GM12878 (cell line): ENCODE measurements at regions of chr17 and their contacts with region 1.

Region 1: DNA sequence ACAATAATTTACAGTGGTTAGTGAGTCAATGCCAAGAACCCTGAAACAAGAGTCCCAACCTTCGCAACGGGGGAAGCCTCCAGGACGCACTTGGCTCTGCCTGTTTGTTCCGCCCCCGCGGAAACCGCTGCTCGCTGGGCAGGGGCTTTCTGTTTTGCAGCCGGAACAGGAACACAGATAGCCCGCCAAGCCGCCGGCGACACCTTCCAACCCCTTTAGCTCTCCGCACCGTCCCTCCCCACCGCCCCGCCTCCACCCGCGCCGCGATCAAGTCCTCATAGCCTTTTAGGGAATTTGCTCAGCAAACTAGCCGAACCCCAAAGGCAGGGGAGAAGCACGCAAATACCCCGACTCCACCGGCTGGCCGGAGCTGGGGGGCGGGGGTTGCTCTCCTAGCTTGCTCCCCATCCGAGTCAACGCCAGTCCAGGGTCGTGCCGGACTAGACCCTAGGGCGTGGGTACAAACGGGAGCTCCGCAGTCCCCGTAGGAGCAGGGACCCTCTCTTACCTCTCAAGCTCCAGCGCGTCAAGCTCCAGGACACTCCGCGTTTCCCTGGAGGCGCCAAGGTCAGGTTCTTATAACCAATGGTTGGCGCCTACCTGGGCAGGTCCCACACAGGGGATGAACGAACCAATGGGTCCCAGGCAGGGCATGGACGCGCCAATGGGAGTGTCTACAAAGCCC is at the start of gene SLFN13:
- DNase-seq: peak; percentile 78
- ATAC-seq: peak; percentile 90
- H3K4me3 ChIP-seq: peak within 1 kb of the TSS; percentile 81
- H3K27ac ChIP-seq: peak within 1 kb of the TSS; percentile 99
- H3K4me1 ChIP-seq: peaks cover 3% of the 10 kb centered on the region
- H3K27me3 ChIP-seq: no peaks in the 10 kb centered on the region
- CTCF ChIP-seq: no peak
- EP300 ChIP-seq: peak; percentile 28 to 71; a peak in 2 of 4 replicates
- POLR2A ChIP-seq: peak; percentile 83
- RAD21 ChIP-seq: no peak
- polyA plus RNA-seq, gene SLFN13: 12.4 to 20.2 TPM

Region 2: DNA sequence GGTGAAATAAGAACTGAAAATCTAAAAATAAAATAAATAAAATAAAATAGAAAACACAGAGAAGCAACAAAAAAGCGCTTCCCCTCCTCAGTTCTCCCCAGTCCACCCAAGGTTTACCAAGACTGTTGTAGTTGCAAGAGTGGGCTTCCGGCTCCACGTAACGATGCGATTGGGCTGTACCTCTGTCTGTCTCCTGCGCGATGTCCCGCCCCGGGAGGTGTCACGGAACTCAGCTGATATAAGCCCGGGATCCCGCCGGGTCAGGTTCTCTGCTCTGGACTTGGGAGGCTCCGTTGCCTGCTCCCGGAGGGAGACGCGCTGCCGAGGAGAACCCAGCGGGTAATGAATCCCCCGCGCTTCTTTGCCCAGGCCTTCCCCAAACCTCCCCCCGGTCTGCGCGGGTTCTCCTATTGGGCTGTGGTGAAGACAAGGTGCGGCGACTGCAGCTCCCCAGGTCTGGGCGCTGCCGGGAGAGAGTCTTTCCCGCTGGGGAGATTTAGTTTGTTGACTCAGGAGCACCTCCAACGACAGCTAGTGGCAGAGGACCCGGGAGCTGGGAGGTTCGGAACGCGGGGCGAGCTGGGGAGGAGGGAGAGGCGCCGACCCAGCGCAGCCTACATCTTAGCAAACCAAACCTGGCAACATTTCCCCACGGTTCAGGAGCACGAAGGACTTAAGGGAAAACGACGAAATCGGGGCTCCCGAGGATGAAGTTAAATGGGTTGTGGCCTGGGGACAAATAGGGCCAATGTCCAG is 205.4 kb before region 1 on chr17 and contains the start of gene SLFN5:
- CTCF ChIA-PET with region 1: no interaction called
- POLR2A ChIA-PET with region 1: no interaction called
- RAD21 ChIA-PET with region 1: no interaction called
- SMC1A ChIA-PET with region 1: no interaction called
- in situ Hi-C with region 1: no loop called
- intact Hi-C with region 1: loop called (anchors 5 kb)
- DNase-seq: peak; percentile 73
- ATAC-seq: peak; percentile 97
- H3K4me3 ChIP-seq: peak within 1 kb of the TSS; percentile 98
- H3K27ac ChIP-seq: peak within 1 kb of the TSS; percentile 36
- H3K4me1 ChIP-seq: peaks cover 13% of the 10 kb centered on the region; the same call in 1 of the 2 replicates
- H3K27me3 ChIP-seq: no peaks in the 10 kb centered on the region
- CTCF ChIP-seq: no peak
- EP300 ChIP-seq: no peak
- POLR2A ChIP-seq: peak; percentile 76
- RAD21 ChIP-seq: no peak
- polyA plus RNA-seq, gene SLFN5: 0.19 to 0.58 TPM

Region 3: DNA sequence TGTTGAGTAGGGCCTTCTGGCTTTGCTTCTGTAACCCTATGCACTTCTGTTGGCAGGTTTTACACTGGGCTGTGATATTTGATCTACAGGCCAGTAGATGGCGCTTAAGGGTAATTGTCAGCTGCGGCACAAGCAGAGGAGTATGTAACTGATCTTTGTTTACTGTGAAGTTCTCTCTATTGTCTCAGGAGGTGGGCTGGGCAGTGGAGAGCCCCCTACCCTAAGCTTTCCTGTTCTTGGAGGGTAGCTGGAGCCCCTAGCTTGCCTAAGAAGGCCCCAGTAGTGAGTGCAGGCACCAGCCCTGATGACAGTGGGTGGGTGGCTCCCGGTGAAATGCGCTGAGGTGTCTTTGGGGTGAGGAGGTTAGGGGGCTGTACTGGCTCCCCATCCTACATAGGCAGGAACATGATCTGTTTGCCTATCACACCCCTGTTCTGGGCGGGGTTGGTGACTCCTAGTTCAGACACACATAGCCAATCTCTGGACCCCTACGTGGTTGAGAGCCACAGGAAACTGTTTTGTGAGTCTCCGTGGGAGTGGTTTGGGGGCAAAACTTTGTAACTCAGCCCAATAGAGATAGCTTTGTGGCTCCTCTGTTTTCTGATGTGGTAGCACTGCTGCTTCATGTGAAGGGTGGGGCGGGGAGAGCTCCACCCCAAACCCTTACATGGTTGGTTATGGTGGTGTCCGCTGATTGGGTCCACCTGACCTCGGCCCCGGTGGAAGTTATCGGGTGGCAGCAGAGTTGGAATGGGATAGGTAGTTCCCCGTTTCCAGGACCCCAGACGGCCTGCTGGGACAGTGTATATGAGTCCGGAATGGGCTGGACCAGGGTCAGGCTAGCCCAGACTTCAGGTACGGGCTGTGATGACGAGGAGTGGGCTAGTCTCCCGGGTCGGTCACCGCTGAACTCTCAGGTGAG is 135.3 kb before region 1 on chr17:
- CTCF ChIA-PET with region 1: interaction called, 5 read pairs
- POLR2A ChIA-PET with region 1: no interaction called
- RAD21 ChIA-PET with region 1: interaction called, 10 read pairs
- SMC1A ChIA-PET with region 1: interaction called, 20 read pairs
- in situ Hi-C with region 1: no loop called
- intact Hi-C with region 1: loop called (anchors 2 kb)
- DNase-seq: peak; percentile 43
- ATAC-seq: peak; percentile 97
- H3K4me3 ChIP-seq: peak overlapping the region; percentile 52
- H3K27ac ChIP-seq: no peak overlapping the region
- H3K4me1 ChIP-seq: peaks cover 9% of the 10 kb centered on the region
- H3K27me3 ChIP-seq: no peaks in the 10 kb centered on the region
- CTCF ChIP-seq: peak; percentile 77 to 82 (median 78)
- EP300 ChIP-seq: no peak
- POLR2A ChIP-seq: no peak
- RAD21 ChIP-seq: peak; percentile 92

Region 4: DNA sequence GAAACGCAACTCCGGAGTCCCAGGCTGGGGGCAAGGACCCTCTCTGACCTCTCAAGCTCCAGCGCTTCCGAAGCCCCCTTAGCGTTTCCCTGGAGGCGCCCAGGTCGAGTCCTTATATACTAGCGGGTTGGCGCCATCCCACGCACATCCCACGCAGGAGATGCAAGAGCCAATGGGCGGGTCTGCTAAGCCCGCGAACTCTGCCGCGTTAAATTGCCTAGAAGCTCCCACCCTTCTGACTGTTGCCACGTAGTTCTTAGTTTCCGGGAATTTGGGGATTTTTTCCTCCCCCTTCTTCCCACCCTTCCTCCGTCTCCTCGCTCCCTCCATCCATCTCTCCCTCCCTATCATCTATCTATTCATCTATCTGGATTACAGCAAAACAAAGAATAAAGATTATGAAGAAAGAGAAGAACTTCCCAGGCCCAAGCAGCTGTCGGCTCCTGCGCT is 74.8 kb before region 1 on chr17 and contains the start of gene SLFN11:
- CTCF ChIA-PET with region 1: interaction called, 7 read pairs
- POLR2A ChIA-PET with region 1: interaction called, 11 read pairs
- RAD21 ChIA-PET with region 1: interaction called, 6 read pairs
- SMC1A ChIA-PET with region 1: interaction called, 12 read pairs
- in situ Hi-C with region 1: no loop called
- intact Hi-C with region 1: loop called (anchors 1 kb)
- DNase-seq: peak; percentile 30
- ATAC-seq: peak; percentile 80
- H3K4me3 ChIP-seq: peak within 1 kb of the TSS; percentile 70
- H3K27ac ChIP-seq: no peak within 1 kb of the TSS; the same call in 1 of the 2 replicates
- H3K4me1 ChIP-seq: peaks cover 3% of the 10 kb centered on the region
- H3K27me3 ChIP-seq: peaks cover 0 to 9% of the 10 kb centered on the region in 2 experiments; a peak in 3 of 4 replicates
- CTCF ChIP-seq: no peak
- EP300 ChIP-seq: no peak
- POLR2A ChIP-seq: peak; percentile 91
- RAD21 ChIP-seq: no peak
- polyA plus RNA-seq, gene SLFN11: 7.9 to 8.0 TPM

Region 5: DNA sequence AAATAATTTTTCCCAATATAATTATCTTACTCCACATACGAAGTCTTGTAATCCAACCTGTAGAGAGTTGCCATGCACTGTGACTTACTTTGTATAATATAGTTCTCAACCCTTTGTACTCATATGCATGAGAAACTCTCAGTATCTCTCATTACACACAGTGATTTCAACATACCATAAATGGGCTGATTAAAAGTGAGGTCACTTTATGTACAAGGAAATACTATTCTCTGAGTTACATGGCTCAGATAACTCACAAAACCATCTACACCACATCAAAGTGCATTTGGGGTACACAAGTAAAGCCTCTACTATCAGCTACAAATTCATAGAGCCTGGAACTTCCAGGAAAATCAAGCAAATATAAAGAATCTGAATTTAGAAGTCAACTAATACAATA is 44.0 kb before region 1 on chr17:
- CTCF ChIA-PET with region 1: no interaction called
- POLR2A ChIA-PET with region 1: no interaction called
- RAD21 ChIA-PET with region 1: interaction called, 10 read pairs
- SMC1A ChIA-PET with region 1: interaction called, 7 read pairs
- in situ Hi-C with region 1: no loop called
- intact Hi-C with region 1: no loop called
- DNase-seq: no peak
- ATAC-seq: peak; percentile 95
- H3K4me3 ChIP-seq: no peak overlapping the region
- H3K27ac ChIP-seq: no peak overlapping the region
- H3K4me1 ChIP-seq: no peaks in the 10 kb centered on the region
- H3K27me3 ChIP-seq: no peaks in the 10 kb centered on the region
- CTCF ChIP-seq: no peak
- EP300 ChIP-seq: no peak
- POLR2A ChIP-seq: no peak
- RAD21 ChIP-seq: no peak

Region 6: GRCh38 chr17:35432176-35433074 is 15.9 kb before region 1 on chr17 and contains the start of gene SLFN12:
- CTCF ChIA-PET with region 1: interaction called, 11 read pairs
- POLR2A ChIA-PET with region 1: interaction called, 20 read pairs
- RAD21 ChIA-PET with region 1: interaction called, 4 read pairs
- SMC1A ChIA-PET with region 1: interaction called, 24 read pairs
- in situ Hi-C with region 1: no loop called
- intact Hi-C with region 1: no loop called
- DNase-seq: peak; percentile 67
- ATAC-seq: peak; percentile 94
- H3K4me3 ChIP-seq: peak within 1 kb of the TSS; percentile 82
- H3K27ac ChIP-seq: peak within 1 kb of the TSS; percentile 90
- H3K4me1 ChIP-seq: peaks cover 16% of the 10 kb centered on the region
- H3K27me3 ChIP-seq: no peaks in the 10 kb centered on the region
- CTCF ChIP-seq: no peak
- EP300 ChIP-seq: no peak
- POLR2A ChIP-seq: 0 out of 2 replicates have a peak, but pooled peaks have one; percentile 28
- RAD21 ChIP-seq: no peak
- polyA plus RNA-seq, gene SLFN12: 11.2 to 14.8 TPM

Region 7: GRCh38 chr17:35486920-35487732 is 38.8 kb after region 1 on chr17:
- CTCF ChIA-PET with region 1: interaction called, 11 read pairs
- POLR2A ChIA-PET with region 1: interaction called, 13 read pairs
- RAD21 ChIA-PET with region 1: interaction called, 12 read pairs
- SMC1A ChIA-PET with region 1: interaction called, 14 read pairs
- in situ Hi-C with region 1: no loop called
- intact Hi-C with region 1: loop called (anchors 2 kb)
- DNase-seq: peak; percentile 23
- ATAC-seq: peak; percentile 88
- H3K4me3 ChIP-seq: peak overlapping the region; percentile 66
- H3K27ac ChIP-seq: peak overlapping the region; percentile 43
- H3K4me1 ChIP-seq: peaks cover 12% of the 10 kb centered on the region
- H3K27me3 ChIP-seq: no peaks in the 10 kb centered on the region
- CTCF ChIP-seq: no peak
- EP300 ChIP-seq: no peak
- POLR2A ChIP-seq: 0 out of 2 replicates have a peak, but pooled peaks have one; percentile 23
- RAD21 ChIP-seq: no peak